MCF 10A (cell line): ENCODE measurements at regions of chr3 and their contacts with region 1.

Region 1: DNA sequence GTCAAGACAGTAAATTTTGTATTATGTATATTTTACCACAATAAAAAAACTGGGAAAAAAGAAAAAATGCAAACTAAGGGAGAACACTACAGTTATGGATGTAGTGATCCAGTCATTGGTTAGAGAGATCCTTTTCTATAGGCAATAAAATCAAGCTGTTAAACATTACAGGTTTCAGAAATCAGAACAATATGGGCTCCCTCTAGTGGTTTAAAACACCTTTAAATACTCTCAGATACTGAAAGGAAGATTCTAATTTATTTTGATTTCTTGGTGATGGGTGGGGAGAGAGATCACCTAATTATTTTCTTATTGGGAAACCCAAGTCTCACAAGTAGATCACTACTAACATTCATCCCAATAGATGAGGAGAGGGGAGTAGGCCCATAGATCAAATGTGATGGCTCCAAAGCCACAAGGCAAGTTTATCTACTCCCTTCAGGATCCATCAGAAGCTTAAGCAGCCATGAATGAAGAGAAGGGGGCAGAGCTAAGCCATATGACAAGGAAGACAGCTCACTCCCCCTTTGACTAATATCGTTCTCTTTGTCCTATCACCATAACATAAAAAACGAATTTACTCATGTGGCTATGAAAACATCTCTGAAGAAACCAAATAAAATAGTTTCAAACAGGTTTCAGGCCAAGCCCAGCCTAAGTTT is 118.6 kb downstream of the ANO10 start:
- DNase-seq: peak; percentile 37
- H3K4me3 Mint-ChIP-seq: no peak overlapping the region
- H3K27ac Mint-ChIP-seq: no peak overlapping the region
- H3K4me1 Mint-ChIP-seq: peaks cover 4% of the 10 kb centered on the region
- H3K27me3 Mint-ChIP-seq: no peaks in the 10 kb centered on the region
- CTCF ChIP-seq: peak; percentile 51

Region 2: GRCh38 chr3:43155464-43156121 is 347.6 kb before region 1 on chr3:
- CTCF ChIA-PET with region 1: interaction called, 98 read pairs
- POLR2A ChIA-PET with region 1: no interaction called
- intact Hi-C with region 1: no loop called
- DNase-seq: peak; percentile 88
- H3K4me3 Mint-ChIP-seq: no peak overlapping the region
- H3K27ac Mint-ChIP-seq: no peak overlapping the region
- H3K4me1 Mint-ChIP-seq: peaks cover 9% of the 10 kb centered on the region
- H3K27me3 Mint-ChIP-seq: peaks cover 12% of the 10 kb centered on the region
- CTCF ChIP-seq: peak; percentile 66

Region 3: DNA sequence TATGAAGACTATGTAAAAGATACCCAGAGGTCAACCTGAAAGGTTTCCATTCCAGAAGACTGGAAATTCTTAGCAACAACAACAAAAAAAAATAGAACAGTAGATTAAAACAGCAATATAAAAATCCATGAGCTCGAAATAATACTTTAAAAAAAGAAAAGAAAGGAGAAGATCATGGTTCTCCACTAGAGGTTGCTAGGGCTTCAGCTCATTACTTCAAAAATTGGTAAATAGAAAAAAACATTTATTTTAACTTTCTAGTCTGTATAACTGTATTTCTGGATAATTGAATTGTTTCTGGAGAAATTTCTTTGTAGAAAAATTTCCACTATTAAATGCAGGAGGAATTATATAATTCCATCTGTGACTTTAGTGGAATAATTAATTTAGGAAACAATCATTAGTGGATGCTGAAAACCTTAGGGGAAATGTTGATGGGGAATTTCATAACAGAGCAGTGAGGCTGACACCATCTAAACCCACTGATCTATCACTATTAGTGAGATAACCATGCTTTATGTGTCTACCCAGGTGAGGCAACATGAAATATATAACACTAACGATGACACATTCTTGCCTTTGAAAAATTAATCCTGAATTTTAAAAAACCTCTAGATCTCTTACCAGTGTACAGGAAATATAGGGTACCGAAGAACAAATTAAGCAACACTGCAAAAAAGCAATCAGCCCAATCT is 279.4 kb before region 1 on chr3:
- CTCF ChIA-PET with region 1: interaction called, 9 read pairs
- POLR2A ChIA-PET with region 1: no interaction called
- intact Hi-C with region 1: loop called (anchors 2 kb)
- DNase-seq: no peak
- H3K4me3 Mint-ChIP-seq: no peak overlapping the region
- H3K27ac Mint-ChIP-seq: no peak overlapping the region
- H3K4me1 Mint-ChIP-seq: no peaks in the 10 kb centered on the region
- H3K27me3 Mint-ChIP-seq: no peaks in the 10 kb centered on the region
- CTCF ChIP-seq: peak; percentile 17